ENCODE measurements at regions of chr2 and their contacts with region 1.

Region 1: DNA sequence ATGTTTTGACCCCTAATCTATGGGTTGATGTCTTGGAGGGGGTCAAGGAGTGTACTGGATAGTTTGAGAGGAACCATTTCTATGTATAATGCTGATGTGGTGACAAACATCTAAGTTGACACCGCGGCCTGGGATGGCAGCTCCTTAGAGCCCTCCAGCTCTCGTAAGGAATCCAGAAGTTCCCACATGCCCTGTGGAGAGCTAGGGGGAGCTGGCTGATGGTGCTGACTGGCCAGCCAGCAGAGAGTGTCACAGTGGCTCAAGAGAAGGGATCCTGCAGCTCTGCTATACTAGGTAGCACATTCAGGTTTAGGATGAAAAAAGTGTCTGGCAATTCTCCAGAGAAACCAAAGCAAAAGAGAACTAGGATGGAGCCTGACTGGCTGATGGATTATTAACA is 842.2 kb upstream of the VRK2 start:
- DNase-seq: no peak
- ATAC-seq: no peak
- H3K4me3 ChIP-seq: no peak overlapping the region
- H3K27ac ChIP-seq: no peak overlapping the region
- H3K4me1 ChIP-seq: no peaks in the 10 kb centered on the region
- H3K27me3 ChIP-seq: no peaks in the 10 kb centered on the region
- CTCF ChIP-seq: no peak
- EP300 ChIP-seq: no peak
- POLR2A ChIP-seq: no peak
- RAD21 ChIP-seq: no peak

Region 2: DNA sequence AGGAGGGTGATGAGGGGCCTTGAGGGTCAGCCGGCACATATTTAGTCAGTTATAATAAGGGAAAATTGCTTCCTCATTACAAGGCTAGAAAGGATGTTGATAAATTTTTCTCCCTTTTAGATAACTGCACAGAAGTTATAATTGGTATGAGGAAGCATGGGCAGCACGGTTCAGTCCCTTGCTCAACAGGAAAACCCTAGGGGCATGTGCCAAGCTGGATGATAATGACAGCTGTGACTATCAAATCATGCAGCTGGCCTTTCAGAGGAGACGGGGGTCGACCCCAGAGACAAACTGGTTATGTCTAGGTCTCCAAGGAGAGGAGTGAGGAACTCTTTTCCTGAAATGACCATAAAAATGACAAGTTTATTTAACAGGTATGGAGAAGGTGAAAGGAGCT is 394.2 kb after region 1 on chr2:
- CTCF ChIA-PET with region 1: no interaction called
- POLR2A ChIA-PET with region 1: no interaction called
- in situ Hi-C with region 1: no loop called
- intact Hi-C with region 1: loop called (anchors 10 kb)
- DNase-seq: no peak
- ATAC-seq: no peak
- H3K4me3 ChIP-seq: no peak overlapping the region
- H3K27ac ChIP-seq: no peak overlapping the region
- H3K4me1 ChIP-seq: no peaks in the 10 kb centered on the region
- H3K27me3 ChIP-seq: no peaks in the 10 kb centered on the region
- CTCF ChIP-seq: no peak
- EP300 ChIP-seq: no peak
- POLR2A ChIP-seq: no peak
- RAD21 ChIP-seq: no peak

Measured in HepG2 (cell line).